Mammary epithelial cell (primary cell): ENCODE measurements at regions of chr14 and their contacts with region 1.

Region 1: GRCh38 chr14:20427231-20428009 is 8.5 kb downstream of the KLHL33 start:
- DNase-seq: peak; percentile 58
- H3K4me3 ChIP-seq: peak overlapping the region in 1 of 3 experiments; percentile 4
- H3K27ac ChIP-seq: no peak overlapping the region
- H3K4me1 ChIP-seq: peaks cover 7% of the 10 kb centered on the region
- H3K27me3 ChIP-seq: no peaks in the 10 kb centered on the region
- CTCF ChIP-seq: no peak

Region 2: GRCh38 chr14:20332788-20333493 is 94.5 kb before region 1 on chr14 and contains the start of gene CCNB1IP1:
- CTCF ChIA-PET with region 1: no interaction called
- dilution Hi-C with region 1: no loop called
- in situ Hi-C with region 1: no loop called
- intact Hi-C with region 1: no loop called
- DNase-seq: peak; percentile 89
- H3K4me3 ChIP-seq: peak within 1 kb of the TSS; percentile 59 to 68 (median 64)
- H3K27ac ChIP-seq: peak within 1 kb of the TSS; percentile 80
- H3K4me1 ChIP-seq: peaks cover 12% of the 10 kb centered on the region
- H3K27me3 ChIP-seq: no peaks in the 10 kb centered on the region
- CTCF ChIP-seq: no peak
- total RNA-seq, gene CCNB1IP1: 51.2 to 55.4 TPM

Region 3: DNA sequence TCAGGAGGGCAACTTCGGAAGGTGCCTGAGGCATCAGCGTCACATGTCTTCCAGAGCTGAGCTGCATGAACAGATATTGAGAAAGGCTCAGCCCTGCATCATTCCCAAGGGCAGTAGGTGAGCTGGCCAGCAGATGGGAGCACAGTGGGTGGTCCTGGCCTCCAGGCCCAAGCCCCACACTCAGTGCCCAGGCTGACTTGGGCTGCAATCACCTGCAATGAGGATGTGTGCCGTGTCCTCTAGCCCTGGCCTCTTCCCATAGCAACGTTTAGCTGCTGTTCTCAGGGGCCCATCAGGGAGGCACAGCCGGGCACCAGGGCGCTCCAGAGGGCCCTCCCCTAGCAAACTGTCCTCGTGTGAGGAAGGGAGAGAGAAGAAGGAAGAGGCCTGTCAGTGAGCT is 46.1 kb before region 1 on chr14:
- CTCF ChIA-PET with region 1: no interaction called
- dilution Hi-C with region 1: loop called (anchors 5 kb)
- in situ Hi-C with region 1: no loop called
- intact Hi-C with region 1: no loop called
- DNase-seq: no peak
- H3K4me3 ChIP-seq: no peak overlapping the region
- H3K27ac ChIP-seq: no peak overlapping the region
- H3K4me1 ChIP-seq: no peaks in the 10 kb centered on the region
- H3K27me3 ChIP-seq: no peaks in the 10 kb centered on the region
- CTCF ChIP-seq: no peak

Region 4: GRCh38 chr14:20461274-20462001 is 34.0 kb after region 1 on chr14 and contains the start of gene PIP4P1:
- CTCF ChIA-PET with region 1: no interaction called
- dilution Hi-C with region 1: loop called (anchors 5 kb)
- in situ Hi-C with region 1: no loop called
- intact Hi-C with region 1: no loop called
- DNase-seq: peak; percentile 100
- H3K4me3 ChIP-seq: peak within 1 kb of the TSS; percentile 53 to 87 (median 73)
- H3K27ac ChIP-seq: peak within 1 kb of the TSS; percentile 76
- H3K4me1 ChIP-seq: peaks cover 21% of the 10 kb centered on the region
- H3K27me3 ChIP-seq: no peaks in the 10 kb centered on the region
- CTCF ChIP-seq: no peak
- total RNA-seq, gene PIP4P1: 18.8 to 22.2 TPM

Region 5: DNA sequence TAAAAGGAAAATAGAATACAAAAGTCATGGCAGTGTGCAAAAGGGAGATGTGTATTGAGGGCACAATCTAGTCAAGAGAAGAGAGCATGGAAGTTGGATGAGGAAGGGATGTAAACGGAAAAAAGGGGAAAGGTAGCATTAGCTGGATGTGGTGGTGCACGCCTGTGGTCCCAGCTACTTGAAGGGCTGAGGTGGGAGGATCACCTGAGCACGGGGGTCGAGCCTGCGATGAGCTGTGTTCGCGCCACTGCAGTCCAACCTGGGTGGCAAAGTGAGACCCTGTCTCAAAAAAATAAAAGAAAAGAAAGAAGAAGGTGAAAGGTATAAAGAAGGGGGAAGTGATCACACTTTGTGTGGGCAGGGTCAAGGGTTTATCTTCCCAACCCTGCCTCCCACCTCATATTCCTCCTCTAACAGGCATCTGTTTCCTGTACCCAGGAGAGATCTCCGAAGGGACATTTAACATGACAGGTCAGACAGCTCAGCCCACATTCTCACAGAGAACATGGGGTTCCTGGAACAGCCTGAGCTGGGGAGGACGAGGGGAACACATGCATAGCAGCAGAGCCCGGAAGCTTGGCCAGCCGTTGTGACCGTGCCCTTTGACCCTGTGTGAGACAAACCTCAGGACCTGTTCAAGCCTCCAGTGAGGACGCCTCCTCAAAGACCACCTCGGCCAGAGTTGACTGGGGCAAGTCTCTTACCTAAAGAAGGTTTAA is 151.5 kb after region 1 on chr14:
- CTCF ChIA-PET with region 1: no interaction called
- dilution Hi-C with region 1: loop called (anchors 10 kb)
- in situ Hi-C with region 1: no loop called
- intact Hi-C with region 1: no loop called
- DNase-seq: no peak
- H3K4me3 ChIP-seq: no peak overlapping the region
- H3K27ac ChIP-seq: no peak overlapping the region
- H3K4me1 ChIP-seq: no peaks in the 10 kb centered on the region
- H3K27me3 ChIP-seq: no peaks in the 10 kb centered on the region
- CTCF ChIP-seq: no peak